ENCODE measurements at regions of chr3 and their contacts with region 1.

Region 1: DNA sequence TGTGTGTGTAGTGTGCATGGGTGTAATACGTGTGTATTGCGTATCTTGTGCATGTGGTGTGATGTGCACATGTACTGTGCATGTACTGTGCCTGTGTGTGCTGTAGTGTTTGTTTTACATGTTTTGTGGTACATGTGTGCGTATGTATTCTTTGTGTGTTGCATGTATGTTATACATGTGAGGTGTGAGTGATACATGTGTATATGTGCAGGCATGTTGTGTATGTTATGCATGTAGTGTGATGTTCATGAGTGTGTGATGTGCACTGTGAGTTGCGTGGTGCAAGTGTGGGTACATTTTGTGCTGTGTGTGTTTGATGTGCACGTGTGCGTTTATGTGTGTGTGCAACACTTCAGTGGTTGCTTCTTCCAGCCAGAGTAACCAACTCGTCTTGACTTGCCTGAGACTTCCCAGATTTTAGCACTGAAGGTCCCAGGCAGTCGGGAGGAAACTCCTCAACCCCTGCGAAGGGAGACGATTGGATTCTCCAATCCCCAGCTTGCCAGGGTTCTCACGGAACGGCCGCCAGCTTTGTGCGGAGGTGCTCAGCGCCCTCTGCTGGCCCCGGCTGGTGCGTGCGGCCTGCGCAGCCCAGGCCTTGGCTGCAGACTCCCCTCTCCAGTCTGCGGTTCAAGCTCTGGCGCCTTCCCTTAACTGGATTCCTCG is 3.6 kb downstream of the GALNT15 start:
- DNase-seq: peak; percentile 86
- ATAC-seq: peak; percentile 61
- H3K4me3 ChIP-seq: peak overlapping the region; percentile 76; the same call in 1 of the 2 replicates
- H3K27ac ChIP-seq: peak overlapping the region; percentile 80
- H3K4me1 ChIP-seq: peaks cover 49% of the 10 kb centered on the region
- H3K27me3 ChIP-seq: no peaks in the 10 kb centered on the region
- CTCF ChIP-seq: peak; percentile 98
- POLR2A ChIP-seq: peak; percentile 67
- RAD21 ChIP-seq: peak; percentile 99

Region 2: DNA sequence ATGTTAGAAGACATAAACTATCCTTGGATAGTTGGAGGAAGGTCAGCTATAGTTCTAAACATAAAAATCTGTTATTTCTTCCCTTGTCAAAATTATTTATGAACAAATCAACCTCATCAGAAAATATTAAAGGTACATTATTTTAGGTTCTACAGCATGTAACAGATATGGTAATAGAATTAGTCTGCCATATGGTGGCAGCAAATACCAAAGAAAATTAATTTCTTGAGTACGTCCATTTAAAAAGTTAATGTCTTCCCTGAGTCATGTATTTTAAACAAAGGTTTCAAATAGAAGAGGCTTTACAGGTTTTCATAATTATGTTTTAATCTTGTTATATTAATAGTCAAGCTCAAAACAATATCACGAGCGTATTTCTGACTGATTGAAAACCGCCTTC is 362.4 kb before region 1 on chr3:
- CTCF ChIA-PET with region 1: interaction called, 5 read pairs
- POLR2A ChIA-PET with region 1: no interaction called
- dilution Hi-C with region 1: no loop called
- in situ Hi-C with region 1: loop called (anchors 10 kb)
- intact Hi-C with region 1: loop called (anchors 1 kb)
- DNase-seq: peak; percentile 88
- ATAC-seq: peak; percentile 79
- H3K4me3 ChIP-seq: no peak overlapping the region
- H3K27ac ChIP-seq: peak overlapping the region; percentile 61; the same call in 1 of the 2 replicates
- H3K4me1 ChIP-seq: peaks cover 3% of the 10 kb centered on the region; the same call in 1 of the 2 replicates
- H3K27me3 ChIP-seq: no peaks in the 10 kb centered on the region
- CTCF ChIP-seq: peak; percentile 67
- POLR2A ChIP-seq: no peak
- RAD21 ChIP-seq: peak; percentile 75

Region 3: DNA sequence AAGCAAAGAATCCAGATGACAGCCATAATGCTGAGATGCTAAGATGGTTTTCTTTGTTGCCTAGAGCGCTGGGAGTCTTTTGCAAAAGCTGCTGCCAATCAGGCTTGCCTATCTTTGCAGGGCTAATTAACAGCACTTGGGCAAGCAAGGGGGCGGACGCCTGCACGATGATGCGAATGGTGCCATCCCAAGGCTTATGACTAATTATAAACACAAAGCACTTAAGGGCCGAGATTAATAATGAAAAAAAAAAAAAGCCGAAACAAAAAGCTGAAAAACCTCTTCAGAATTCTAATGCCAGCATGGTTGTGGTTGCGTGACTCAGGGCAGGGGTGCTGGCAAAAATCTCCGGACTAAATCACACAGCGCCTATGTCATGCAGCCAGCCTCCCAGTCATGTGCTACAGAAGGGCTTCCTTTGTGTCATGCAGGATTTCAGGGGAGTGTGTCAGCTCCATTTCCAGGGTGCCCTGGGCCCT is 195.4 kb before region 1 on chr3:
- CTCF ChIA-PET with region 1: interaction called, 4 read pairs
- POLR2A ChIA-PET with region 1: no interaction called
- dilution Hi-C with region 1: no loop called
- in situ Hi-C with region 1: no loop called
- intact Hi-C with region 1: loop called (anchors 1 kb)
- DNase-seq: peak; percentile 96
- ATAC-seq: peak; percentile 92
- H3K4me3 ChIP-seq: peak overlapping the region; percentile 7; the same call in 1 of the 2 replicates
- H3K27ac ChIP-seq: peak overlapping the region; percentile 94
- H3K4me1 ChIP-seq: peaks cover 7% of the 10 kb centered on the region
- H3K27me3 ChIP-seq: no peaks in the 10 kb centered on the region
- CTCF ChIP-seq: no peak
- POLR2A ChIP-seq: no peak
- RAD21 ChIP-seq: no peak; the same call in 1 of the 2 replicates

Region 4: GRCh38 chr3:16060358-16060852 is 117.7 kb before region 1 on chr3:
- CTCF ChIA-PET with region 1: interaction called, 13 read pairs
- POLR2A ChIA-PET with region 1: interaction called, 4 read pairs
- dilution Hi-C with region 1: no loop called
- in situ Hi-C with region 1: loop called (anchors 5 kb)
- intact Hi-C with region 1: loop called (anchors 1 kb)
- DNase-seq: peak; percentile 100
- ATAC-seq: peak; percentile 79
- H3K4me3 ChIP-seq: no peak overlapping the region
- H3K27ac ChIP-seq: peak overlapping the region; percentile 95
- H3K4me1 ChIP-seq: peaks cover 33% of the 10 kb centered on the region
- H3K27me3 ChIP-seq: no peaks in the 10 kb centered on the region
- CTCF ChIP-seq: peak; percentile 45
- POLR2A ChIP-seq: peak; percentile 43; the same call in 1 of the 2 replicates
- RAD21 ChIP-seq: peak; percentile 54

Region 5: GRCh38 chr3:16124636-16125035 is 53.5 kb before region 1 on chr3:
- CTCF ChIA-PET with region 1: interaction called, 3 read pairs
- POLR2A ChIA-PET with region 1: no interaction called
- dilution Hi-C with region 1: no loop called
- in situ Hi-C with region 1: no loop called
- intact Hi-C with region 1: loop called (anchors 2 kb)
- DNase-seq: peak; percentile 100
- ATAC-seq: peak; percentile 87
- H3K4me3 ChIP-seq: no peak overlapping the region
- H3K27ac ChIP-seq: peak overlapping the region; percentile 97
- H3K4me1 ChIP-seq: peaks cover 35% of the 10 kb centered on the region
- H3K27me3 ChIP-seq: no peaks in the 10 kb centered on the region
- CTCF ChIP-seq: no peak
- POLR2A ChIP-seq: no peak; the same call in 1 of the 2 replicates
- RAD21 ChIP-seq: peak; percentile 2

Region 6: GRCh38 chr3:16247276-16248061 is 69.4 kb after region 1 on chr3:
- CTCF ChIA-PET with region 1: interaction called, 3 read pairs
- POLR2A ChIA-PET with region 1: interaction called, 13 read pairs
- dilution Hi-C with region 1: no loop called
- in situ Hi-C with region 1: loop called (anchors 5 kb)
- intact Hi-C with region 1: loop called (anchors 1 kb)
- DNase-seq: peak; percentile 84
- ATAC-seq: peak; percentile 88
- H3K4me3 ChIP-seq: no peak overlapping the region
- H3K27ac ChIP-seq: no peak overlapping the region
- H3K4me1 ChIP-seq: peaks cover 13% of the 10 kb centered on the region
- H3K27me3 ChIP-seq: no peaks in the 10 kb centered on the region
- CTCF ChIP-seq: peak; percentile 96
- POLR2A ChIP-seq: peak; percentile 50
- RAD21 ChIP-seq: peak; percentile 99

Measured in IMR-90 (cell line).